Caco-2 (cell line): ENCODE measurements at regions of chr4 and their contacts with region 1.

Region 1: DNA sequence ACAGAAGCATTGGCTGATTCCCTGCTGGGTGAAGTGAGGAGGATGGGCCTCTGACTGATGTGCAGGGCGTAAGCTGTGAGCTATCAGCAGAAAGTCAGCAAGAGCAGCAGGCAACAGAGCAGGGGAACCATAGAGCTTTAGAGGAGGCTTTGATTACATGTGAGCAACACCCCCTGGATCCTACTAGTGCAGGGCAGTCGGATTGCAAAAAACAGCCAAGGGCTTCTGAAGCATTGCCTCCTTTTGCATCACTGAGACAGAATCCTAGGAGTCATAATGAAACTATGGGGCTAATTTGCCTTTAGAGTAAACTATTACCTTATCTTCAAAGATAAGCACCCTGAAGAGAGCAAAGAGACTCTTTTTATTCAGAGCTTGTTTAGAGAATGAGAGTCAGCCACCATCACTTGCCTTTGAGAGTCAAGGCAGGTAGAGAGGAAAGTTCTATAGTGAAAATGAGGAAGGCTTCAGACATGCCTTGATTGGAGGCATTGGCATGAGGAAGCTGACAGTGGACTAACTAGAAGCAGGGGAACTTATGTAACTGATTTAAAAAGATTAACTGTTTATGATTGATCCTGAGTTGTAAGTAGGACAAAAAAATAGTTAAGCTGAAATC is 420.3 kb downstream of the PDHA2 start:
- DNase-seq: peak; percentile 27 to 35
- H3K4me3 ChIP-seq: no peak overlapping the region
- H3K4me3 Mint-ChIP-seq: no peak overlapping the region
- H3K27ac Mint-ChIP-seq: peak overlapping the region; percentile 25
- H3K4me1 ChIP-seq: 0 out of 2 replicates have a peak, but pooled peaks cover 7% of the 10 kb centered on the region
- H3K4me1 Mint-ChIP-seq: peaks cover 7% of the 10 kb centered on the region
- H3K27me3 ChIP-seq: no peaks in the 10 kb centered on the region
- H3K27me3 Mint-ChIP-seq: peaks cover 2% of the 10 kb centered on the region
- CTCF ChIP-seq: no peak

Region 2: GRCh38 chr4:95867919-95868318 is 392.3 kb before region 1 on chr4:
- CTCF ChIA-PET with region 1: no interaction called
- POLR2A ChIA-PET with region 1: no interaction called
- intact Hi-C with region 1: no loop called
- DNase-seq: no peak
- H3K4me3 ChIP-seq: no peak overlapping the region
- H3K4me3 Mint-ChIP-seq: no peak overlapping the region
- H3K27ac Mint-ChIP-seq: no peak overlapping the region
- H3K4me1 ChIP-seq: no peaks in the 10 kb centered on the region
- H3K4me1 Mint-ChIP-seq: no peaks in the 10 kb centered on the region
- H3K27me3 ChIP-seq: no peaks in the 10 kb centered on the region
- H3K27me3 Mint-ChIP-seq: no peaks in the 10 kb centered on the region
- CTCF ChIP-seq: no peak

Region 3: GRCh38 chr4:96305030-96305429 is 44.9 kb after region 1 on chr4:
- CTCF ChIA-PET with region 1: no interaction called
- POLR2A ChIA-PET with region 1: no interaction called
- intact Hi-C with region 1: loop called (anchors 1 kb)
- DNase-seq: peak; percentile 54 to 58
- H3K4me3 ChIP-seq: no peak overlapping the region
- H3K4me3 Mint-ChIP-seq: peak overlapping the region; percentile 37
- H3K27ac Mint-ChIP-seq: no peak overlapping the region
- H3K4me1 ChIP-seq: peaks cover 16% of the 10 kb centered on the region
- H3K4me1 Mint-ChIP-seq: peaks cover 5% of the 10 kb centered on the region
- H3K27me3 ChIP-seq: no peaks in the 10 kb centered on the region
- H3K27me3 Mint-ChIP-seq: no peaks in the 10 kb centered on the region
- CTCF ChIP-seq: no peak